Posterior vena cava (tissue), 2 donors: ENCODE measurements at regions of chr3 and their contacts with region 1.

Region 1: GRCh38 chr3:31671976-31672375 is 139.3 kb downstream of the STT3B start:
- DNase-seq: no peak

Region 2: GRCh38 chr3:29822071-29822470 is 1849.9 kb before region 1 on chr3:
- intact Hi-C with region 1: loop called in 1 of 2 experiments (anchors 10 kb)
- DNase-seq: no peak

Region 3: DNA sequence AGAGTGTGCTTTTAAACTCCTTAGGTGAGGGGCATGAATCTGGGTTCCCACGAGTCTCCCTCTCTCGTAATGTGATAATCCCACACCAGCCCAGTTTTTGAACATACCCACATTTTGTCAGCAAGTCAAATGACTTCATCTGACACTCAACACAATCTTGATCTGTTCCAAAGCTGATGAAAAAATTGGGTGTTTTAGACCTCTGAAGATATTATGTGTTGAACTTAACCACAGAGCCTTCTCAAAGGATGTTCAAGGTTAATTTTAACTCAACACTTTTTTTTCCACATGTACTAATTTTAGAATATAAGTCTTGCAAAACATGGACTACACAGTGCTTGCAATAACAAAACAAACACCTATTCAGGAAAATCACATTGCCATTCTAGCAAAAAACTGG is 942.5 kb before region 1 on chr3:
- intact Hi-C with region 1: no loop called
- DNase-seq: no peak

Region 4: GRCh38 chr3:31858439-31858838 is 186.5 kb after region 1 on chr3:
- intact Hi-C with region 1: no loop called
- DNase-seq: no peak